Activated CD4-positive, alpha-beta T cell treated with anti-CD3 and anti-CD28 coated beads, Interleukin-2, amount 10 ng/mL, durations not matched to agents 24 days and 14 days (primary cell): ENCODE measurements at regions of chr10 and their contacts with region 1.

Region 1: GRCh38 chr10:62352356-62352970 is 21.7 kb upstream of the ZNF365 start:
- DNase-seq: peak; percentile 50
- H3K4me3 Mint-ChIP-seq: no peak overlapping the region
- H3K27ac Mint-ChIP-seq: peak overlapping the region; percentile 46
- H3K4me1 Mint-ChIP-seq: peaks cover 6% of the 10 kb centered on the region
- H3K27me3 Mint-ChIP-seq: no peaks in the 10 kb centered on the region

Region 2: DNA sequence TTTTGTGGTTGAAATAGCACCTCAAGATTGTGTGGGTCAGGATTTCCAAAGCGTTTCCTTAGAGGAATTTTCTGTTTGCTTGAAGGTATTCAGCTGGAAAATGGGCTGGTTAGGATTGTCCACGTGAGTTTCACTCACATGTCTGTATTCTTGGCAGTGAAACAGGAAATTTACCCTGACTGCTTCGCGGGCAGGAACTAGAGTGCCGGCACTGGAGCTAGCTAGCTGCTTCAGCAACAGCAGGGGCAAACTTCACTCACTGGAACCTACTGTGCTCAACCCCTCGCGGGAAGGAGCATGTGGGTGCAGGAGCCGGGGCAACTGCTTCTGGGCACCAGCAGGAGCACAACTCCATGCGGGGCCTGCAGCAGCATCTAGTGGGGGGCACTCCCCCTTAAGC is 45.8 kb before region 1 on chr10:
- intact Hi-C with region 1: loop called (anchors 5 kb)
- DNase-seq: peak; percentile 59
- H3K4me3 Mint-ChIP-seq: no peak overlapping the region
- H3K27ac Mint-ChIP-seq: no peak overlapping the region
- H3K4me1 Mint-ChIP-seq: no peaks in the 10 kb centered on the region
- H3K27me3 Mint-ChIP-seq: peaks cover 2% of the 10 kb centered on the region